ENCODE measurements at regions of chr12 and their contacts with region 1.

Region 1: DNA sequence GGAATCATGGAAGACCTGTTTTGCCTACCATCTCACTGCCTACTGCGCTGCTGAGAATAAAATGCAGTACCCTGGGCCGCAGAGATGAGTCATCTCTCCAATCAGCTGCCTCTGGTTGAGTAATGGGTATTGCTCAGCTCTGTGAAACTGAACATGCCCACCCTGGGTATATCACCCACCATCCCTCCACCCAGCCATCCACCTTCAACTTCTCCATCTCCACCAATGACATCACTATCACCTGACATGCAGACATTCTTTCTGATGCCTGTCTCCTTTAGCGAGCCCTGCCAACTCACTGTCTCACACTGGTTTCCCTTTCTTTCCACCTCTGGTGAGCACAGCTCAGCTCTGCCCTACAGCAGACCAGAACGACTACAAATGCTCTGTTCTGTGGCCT is 33.6 kb downstream of the E2F7 start:
- H3K4me3 ChIP-seq: no peak overlapping the region
- H3K27ac ChIP-seq: no peak overlapping the region
- H3K4me1 ChIP-seq: no peaks in the 10 kb centered on the region
- CTCF ChIP-seq: no peak

Region 2: DNA sequence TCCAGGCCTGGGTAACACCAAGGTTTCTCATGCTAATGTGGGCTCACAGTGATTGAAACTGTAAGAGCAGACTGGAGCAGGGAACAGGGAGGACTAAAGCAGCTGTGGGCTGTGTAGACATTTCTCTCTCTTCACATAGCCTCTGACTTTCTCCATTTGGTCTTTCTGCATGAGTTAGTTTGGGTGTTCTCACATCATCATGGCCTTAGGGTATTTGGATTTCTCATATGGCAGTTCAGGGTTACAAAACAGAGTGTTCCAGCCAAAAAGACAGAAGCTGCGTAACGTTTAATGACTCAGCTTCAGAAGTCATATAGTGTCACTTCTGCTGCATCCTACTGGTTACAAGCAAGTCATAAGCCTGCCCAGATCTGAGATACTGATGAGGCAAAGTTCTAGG is 420.2 kb before region 1 on chr12:
- CTCF ChIA-PET with region 1: no interaction called
- POLR2A ChIA-PET with region 1: no interaction called
- H3K4me3 ChIP-seq: no peak overlapping the region
- H3K27ac ChIP-seq: no peak overlapping the region
- H3K4me1 ChIP-seq: peaks cover 6% of the 10 kb centered on the region; the same call in 1 of the 2 replicates
- CTCF ChIP-seq: no peak

Region 3: DNA sequence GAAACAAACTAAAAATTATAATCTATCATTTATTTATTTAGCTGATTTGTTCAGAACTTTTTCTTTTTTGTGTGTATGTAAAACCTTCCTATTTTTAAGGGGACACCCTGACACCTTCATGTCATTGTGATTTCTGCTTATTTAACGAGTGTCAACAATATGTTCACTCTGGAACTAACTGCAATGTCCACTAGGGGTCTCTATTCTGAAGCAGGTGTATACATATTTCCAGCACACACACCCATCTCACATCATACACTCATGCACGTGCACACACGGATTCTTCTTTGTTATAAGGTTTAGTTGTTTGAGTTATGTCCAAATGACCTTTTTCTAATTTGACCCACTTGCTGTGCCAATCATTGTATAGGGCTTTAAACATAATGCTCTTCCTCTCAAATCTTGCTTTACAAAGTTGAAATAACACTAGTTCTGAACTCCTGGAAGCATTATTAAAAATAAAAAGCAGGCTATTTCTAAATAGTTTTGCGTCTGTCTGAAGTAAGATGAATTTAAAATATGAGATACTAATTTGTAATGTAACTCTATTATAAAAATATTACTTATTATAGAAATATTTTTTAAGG is 18.1 kb after region 1 on chr12:
- CTCF ChIA-PET with region 1: interaction called, 17 read pairs
- POLR2A ChIA-PET with region 1: no interaction called
- H3K4me3 ChIP-seq: no peak overlapping the region
- H3K27ac ChIP-seq: no peak overlapping the region
- H3K4me1 ChIP-seq: no peaks in the 10 kb centered on the region
- CTCF ChIP-seq: peak; percentile 35; the same call in 1 of the 2 replicates